ENCODE measurements at regions of chr1 and their contacts with region 1.

Region 1: DNA sequence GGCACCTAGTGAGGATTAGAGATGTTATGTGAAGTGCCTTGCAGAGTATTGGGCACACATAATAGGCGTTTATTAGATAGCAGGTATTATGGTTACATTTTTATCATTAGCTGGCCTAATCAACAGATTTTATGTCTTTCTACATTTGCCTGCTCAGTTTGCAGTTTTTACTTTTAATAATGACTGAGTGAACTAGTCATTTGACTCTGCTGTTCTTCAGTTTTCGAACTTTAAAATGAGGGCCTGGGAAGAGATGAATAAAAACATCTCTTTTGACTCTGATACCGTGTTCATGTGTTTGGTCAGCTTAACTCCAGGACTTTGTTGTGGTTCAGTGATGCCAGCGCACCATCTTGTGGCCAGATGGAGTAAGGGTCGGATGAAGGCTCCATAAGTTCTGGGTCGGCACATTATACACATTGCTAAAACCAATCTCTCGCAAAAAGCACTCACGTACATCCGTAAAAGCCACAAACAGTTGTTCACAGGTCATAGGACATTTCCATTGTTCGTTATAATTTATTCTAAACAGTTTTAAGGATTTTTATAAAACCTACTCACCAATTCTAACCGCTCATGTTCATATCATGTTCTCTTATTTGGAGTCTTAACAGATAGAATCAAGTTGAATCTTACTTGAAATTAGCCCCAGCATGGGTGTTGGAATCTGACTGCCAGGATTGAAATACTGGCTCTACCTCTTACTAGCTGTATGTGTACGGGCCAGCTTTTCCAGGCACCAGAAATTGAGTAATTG is 78.4 kb upstream of the GPR88 start:
- DNase-seq: peak; percentile 14
- H3K4me3 ChIP-seq: no peak overlapping the region
- H3K27me3 ChIP-seq: no peaks in the 10 kb centered on the region
- CTCF ChIP-seq: peak; percentile 90

Region 2: GRCh38 chr1:99808391-99809115 is 651.0 kb before region 1 on chr1:
- CTCF ChIA-PET with region 1: interaction called, 19 read pairs
- POLR2A ChIA-PET with region 1: no interaction called
- DNase-seq: peak; percentile 75
- H3K4me3 ChIP-seq: 0 out of 2 replicates have a peak overlapping the region, but pooled peaks have one; percentile 19
- H3K27me3 ChIP-seq: peaks cover 4% of the 10 kb centered on the region
- CTCF ChIP-seq: peak; percentile 43

Region 3: DNA sequence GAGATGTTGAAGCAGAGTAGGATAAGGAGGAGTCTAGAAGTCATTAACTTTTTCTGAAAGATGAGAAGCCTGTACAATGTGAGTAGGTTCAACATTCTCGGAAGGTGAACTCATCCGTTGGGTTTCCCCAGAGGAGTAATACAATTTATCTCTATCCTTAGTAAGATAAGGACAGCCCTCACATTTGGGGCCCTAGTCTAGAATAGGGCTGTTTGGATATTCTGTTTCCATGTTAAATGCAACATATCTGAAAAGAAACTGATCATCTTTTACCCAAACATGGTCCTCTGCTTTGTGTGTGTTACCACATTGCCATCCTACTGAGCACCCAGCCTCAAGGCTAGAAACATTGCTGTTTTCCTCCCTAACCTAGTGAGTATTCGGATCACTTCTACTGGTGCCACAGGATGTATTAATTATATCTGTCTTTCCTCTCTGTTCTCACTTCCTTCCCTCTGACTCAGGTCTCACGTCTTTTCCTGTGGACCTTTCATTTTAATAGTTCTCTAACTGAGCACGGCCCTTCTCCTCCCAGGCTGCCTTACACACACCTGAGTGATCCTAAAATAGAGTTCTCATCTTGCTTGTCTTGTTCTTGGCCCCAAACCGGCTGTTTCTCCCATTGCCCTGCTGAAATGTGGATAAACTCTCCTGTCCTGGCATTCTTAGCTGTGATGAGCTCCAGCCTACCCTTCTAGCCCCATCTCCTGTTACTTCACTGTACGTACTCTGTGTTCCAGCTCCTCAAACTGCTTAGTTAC is 15.5 kb before region 1 on chr1:
- CTCF ChIA-PET with region 1: interaction called, 15 read pairs
- POLR2A ChIA-PET with region 1: no interaction called
- DNase-seq: no peak
- H3K4me3 ChIP-seq: no peak overlapping the region
- H3K27me3 ChIP-seq: no peaks in the 10 kb centered on the region
- CTCF ChIP-seq: no peak

Region 4: DNA sequence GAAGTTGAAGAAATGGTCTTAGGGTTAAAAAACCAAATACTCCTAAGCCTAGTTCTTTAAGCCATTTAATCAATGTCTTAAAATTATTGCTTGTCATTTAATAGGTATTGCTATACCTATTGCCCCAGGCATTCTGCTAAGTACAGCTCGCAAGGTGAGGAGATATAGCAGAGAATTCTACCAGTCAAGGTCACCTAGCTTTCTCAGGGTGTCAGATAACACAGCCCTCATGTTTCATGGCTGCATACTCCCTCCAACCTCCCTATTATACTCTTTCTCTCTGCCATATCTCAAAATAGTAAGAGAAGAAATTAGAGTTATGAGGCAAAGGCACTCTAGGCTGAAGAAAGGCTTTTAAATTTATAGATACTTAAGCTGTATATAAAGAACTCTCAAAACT is 10.0 kb after region 1 on chr1:
- CTCF ChIA-PET with region 1: interaction called, 18 read pairs
- POLR2A ChIA-PET with region 1: no interaction called
- DNase-seq: no peak
- H3K4me3 ChIP-seq: no peak overlapping the region
- H3K27me3 ChIP-seq: no peaks in the 10 kb centered on the region
- CTCF ChIP-seq: no peak

Region 5: DNA sequence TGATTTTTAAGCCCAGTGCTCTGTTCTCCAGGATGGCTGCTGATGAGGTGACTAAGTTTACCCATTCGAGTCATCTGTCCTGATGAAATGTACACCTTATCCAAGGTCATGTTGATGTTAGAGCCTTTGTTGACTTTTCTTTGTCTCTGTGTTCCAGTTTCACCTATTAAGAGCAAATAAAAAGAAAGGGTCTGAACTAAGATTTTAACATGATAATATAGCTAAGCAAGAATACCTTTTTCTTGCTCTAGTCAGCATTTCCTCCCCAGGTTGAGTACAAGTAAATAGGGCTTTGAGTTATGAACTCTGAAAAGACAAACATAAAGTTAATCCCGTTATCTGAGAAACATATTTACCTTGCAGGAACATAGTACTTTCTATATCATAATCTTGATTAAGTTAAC is 26.3 kb after region 1 on chr1:
- CTCF ChIA-PET with region 1: interaction called, 13 read pairs
- POLR2A ChIA-PET with region 1: no interaction called
- DNase-seq: no peak
- H3K4me3 ChIP-seq: no peak overlapping the region
- H3K27me3 ChIP-seq: no peaks in the 10 kb centered on the region
- CTCF ChIP-seq: no peak

Region 6: DNA sequence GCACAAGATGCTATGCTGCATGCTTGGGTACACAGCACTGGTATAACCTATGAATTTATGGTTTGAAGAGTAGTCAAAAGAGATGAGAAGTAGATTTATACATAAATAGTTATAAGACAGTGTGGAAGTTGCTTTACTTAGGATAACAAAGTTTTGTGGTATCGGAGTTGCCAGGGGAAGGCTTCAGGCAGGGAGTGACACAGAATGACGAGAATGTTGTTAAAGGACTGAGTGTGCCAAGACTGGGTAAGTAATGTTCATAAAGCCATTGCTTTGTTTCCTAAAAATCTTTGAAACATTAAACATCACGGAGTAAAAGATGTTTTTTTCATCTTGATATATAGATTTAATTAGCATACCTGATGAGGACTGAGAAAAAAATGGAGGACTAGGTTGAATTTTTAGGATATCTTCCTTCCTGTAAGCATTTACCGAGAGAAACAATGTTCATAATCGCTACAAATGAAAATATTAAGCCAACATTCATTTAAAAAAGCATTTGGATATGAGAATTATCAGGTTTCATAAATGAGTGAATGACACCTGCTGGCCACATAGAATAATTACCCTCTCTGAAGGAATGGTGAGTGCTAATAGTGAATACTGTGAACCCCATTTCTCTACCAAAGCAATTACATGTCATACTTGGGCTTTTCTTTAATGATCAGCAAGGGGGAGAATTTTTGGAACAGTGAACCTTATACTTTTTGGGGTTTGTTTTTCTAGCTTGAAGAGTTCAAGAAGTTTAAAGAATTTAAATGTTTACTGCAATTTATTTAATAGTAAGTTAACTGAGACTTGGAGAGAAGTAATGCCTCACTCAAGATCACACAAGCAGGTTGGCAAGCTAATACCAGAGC is 406.7 kb after region 1 on chr1:
- CTCF ChIA-PET with region 1: interaction called, 85 read pairs
- POLR2A ChIA-PET with region 1: no interaction called
- DNase-seq: no peak
- H3K4me3 ChIP-seq: no peak overlapping the region
- H3K27me3 ChIP-seq: no peaks in the 10 kb centered on the region; the same call in 1 of the 2 replicates
- CTCF ChIP-seq: peak; percentile 48